Activated CD8-positive, alpha-beta memory T cell treated with anti-CD3 and anti-CD28 coated beads, Interleukin-2, amount 10 ng/mL, durations not matched to agents 7 days and 5 days (primary cell): ENCODE measurements at regions of chr2 and their contacts with region 1.

Region 1: DNA sequence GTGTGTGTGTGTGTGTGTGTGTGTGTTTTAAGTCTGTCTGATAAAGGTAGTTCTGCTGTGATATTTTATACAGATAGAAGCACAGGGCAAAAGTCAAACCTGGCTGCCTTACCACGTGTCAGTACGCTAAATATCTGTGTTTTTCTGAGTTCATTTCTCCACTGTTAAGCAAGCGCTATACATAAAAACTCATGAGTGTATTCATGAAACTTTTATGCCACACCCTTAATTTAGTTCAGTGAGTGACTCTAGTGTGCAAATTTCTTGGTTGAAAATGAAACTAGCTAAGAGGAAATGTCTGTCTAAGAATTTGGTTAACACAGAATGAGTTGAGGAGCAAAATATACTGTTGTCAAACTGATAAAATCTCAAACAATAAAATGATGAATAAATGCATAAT is 11.2 kb downstream of the CASP10 start:
- DNase-seq: no peak
- ATAC-seq: peak; percentile 85
- H3K4me3 Mint-ChIP-seq: peak overlapping the region; percentile 65
- H3K27ac Mint-ChIP-seq: peak overlapping the region; percentile 94
- H3K4me1 Mint-ChIP-seq: peaks cover 65% of the 10 kb centered on the region
- H3K27me3 Mint-ChIP-seq: no peaks in the 10 kb centered on the region

Region 2: DNA sequence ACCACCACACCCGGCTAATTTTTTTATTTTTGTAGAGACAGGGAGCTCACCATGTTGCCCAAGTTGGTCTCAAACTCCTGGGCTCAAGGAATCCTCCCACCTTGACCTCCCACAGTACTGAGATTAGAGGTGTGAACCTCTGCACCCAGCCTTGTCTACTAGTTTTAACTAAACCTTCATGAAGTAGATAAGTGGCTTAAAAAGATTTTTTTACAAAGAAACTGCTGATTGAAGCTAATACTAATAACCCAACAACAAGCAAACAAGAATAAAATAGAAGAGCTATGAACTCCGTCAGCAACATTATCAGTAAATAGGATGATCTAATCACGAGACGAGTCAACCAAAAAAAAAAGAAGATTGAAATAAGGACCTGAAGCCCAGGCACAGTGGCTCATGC is 103.5 kb before region 1 on chr2:
- CTCF ChIA-PET with region 1: no interaction called
- DNase-seq: no peak
- ATAC-seq: no peak
- H3K4me3 Mint-ChIP-seq: no peak overlapping the region
- H3K27ac Mint-ChIP-seq: no peak overlapping the region
- H3K4me1 Mint-ChIP-seq: peaks cover 4% of the 10 kb centered on the region
- H3K27me3 Mint-ChIP-seq: no peaks in the 10 kb centered on the region

Region 3: DNA sequence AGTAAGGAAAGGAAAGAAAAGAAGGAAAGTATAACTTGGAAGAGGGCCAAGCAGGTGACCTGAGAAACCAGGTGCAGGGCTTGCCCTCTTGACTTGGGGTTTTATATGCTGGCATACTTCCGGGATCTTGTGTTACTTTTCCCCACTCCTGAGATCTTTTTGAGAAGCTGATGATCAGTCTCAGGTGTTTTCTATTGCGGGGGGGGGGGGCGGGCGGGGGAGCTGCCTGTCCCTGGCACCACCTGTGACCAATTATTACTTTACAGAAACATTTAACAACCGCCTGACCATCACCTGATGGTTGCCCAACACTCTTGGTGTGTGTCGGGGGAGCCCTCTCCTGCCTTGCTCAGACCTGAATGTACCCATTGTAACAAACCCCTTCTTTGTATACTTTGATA is 18.0 kb before region 1 on chr2:
- CTCF ChIA-PET with region 1: interaction called, 63 read pairs
- DNase-seq: no peak
- ATAC-seq: no peak
- H3K4me3 Mint-ChIP-seq: no peak overlapping the region
- H3K27ac Mint-ChIP-seq: no peak overlapping the region
- H3K4me1 Mint-ChIP-seq: peaks cover 31% of the 10 kb centered on the region
- H3K27me3 Mint-ChIP-seq: no peaks in the 10 kb centered on the region

Region 4: DNA sequence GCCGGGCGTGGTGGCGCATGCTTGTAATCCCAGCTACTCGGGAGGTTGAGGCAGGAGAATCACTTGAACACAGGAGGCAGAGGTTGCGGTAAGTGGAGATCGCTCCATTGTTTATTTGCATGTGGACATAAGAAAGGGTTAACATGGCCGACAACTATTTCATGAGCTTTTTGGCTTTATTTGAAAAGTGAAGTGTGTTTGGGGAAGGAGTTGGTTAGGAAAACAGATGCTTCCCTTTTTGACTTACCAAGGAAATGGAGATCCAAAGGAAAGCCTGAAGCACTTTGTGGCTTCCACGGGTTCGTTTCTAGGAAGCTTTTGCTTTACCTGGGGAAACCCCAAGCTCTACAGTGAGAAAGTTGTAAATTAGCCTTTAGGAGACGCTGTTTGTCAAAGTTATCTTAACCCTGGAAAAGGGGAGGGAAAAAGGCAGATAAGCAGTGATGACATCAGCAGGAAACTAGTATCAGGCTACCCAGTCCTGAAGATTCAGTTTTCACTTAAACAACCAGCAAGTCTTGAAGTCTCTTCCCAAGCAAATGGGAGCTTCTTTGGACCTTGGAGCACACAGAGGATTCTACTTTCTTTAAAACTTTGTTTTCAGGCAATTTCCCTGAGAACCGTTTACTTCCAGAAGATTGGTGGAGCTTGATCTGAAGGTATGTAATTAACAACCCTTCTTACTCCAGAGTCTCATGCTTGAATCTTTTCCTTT is 11.3 kb before region 1 on chr2 and contains the start of gene CASP10:
- CTCF ChIA-PET with region 1: interaction called, 63 read pairs
- DNase-seq: peak; percentile 48
- ATAC-seq: peak; percentile 82
- H3K4me3 Mint-ChIP-seq: peak within 1 kb of the TSS; percentile 94
- H3K27ac Mint-ChIP-seq: peak within 1 kb of the TSS; percentile 88
- H3K4me1 Mint-ChIP-seq: peaks cover 55% of the 10 kb centered on the region
- H3K27me3 Mint-ChIP-seq: no peaks in the 10 kb centered on the region
- total RNA-seq, gene CASP10: 26.6 to 37.4 TPM